ENCODE measurements at regions of chr9 and their contacts with region 1.

Region 1: DNA sequence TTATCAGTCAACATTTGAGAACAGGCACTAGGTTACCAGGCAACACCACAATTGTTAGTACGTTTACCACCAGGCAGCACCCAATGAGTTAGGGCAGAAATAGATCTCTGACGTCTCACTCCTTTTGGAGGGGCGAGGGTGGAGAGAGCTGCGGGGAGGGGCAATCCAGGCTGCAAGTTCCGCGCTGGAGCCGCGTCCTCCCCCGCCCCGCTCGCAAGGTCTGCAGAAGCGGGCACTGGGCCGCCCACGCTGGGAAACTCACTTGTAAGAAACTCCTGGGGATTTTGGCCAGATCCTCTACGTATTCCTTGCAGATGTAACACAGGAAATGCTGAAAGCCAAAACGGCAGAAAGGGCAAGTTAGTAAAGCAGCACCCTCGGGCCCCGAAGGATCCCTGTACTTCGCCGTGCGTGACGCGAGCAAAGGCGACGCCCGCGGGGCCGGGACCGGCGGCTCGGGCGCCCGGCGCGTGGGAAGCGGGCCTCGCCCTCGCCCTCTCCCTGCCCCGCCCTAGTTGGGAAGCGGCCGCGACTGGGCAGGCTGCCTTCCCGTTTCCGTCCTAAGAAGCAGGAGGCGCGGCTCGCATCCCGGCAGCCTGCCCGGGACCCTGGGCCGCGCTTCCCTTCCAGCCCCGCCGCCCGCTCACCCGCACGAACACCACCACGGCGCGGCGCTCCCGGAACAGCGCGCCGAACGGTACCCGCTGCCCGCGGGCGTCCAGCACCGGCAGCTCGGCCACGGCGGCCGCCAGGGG is 497 bp downstream of the PRXL2C start:
- DNase-seq: peak; percentile 58
- ATAC-seq: peak; percentile 64
- H3K4me3 Mint-ChIP-seq: peak overlapping the region; percentile 88
- H3K27ac Mint-ChIP-seq: peak overlapping the region; percentile 86
- H3K4me1 Mint-ChIP-seq: peaks cover 17% of the 10 kb centered on the region
- H3K27me3 Mint-ChIP-seq: no peaks in the 10 kb centered on the region
- CTCF ChIP-seq: no peak

Region 2: DNA sequence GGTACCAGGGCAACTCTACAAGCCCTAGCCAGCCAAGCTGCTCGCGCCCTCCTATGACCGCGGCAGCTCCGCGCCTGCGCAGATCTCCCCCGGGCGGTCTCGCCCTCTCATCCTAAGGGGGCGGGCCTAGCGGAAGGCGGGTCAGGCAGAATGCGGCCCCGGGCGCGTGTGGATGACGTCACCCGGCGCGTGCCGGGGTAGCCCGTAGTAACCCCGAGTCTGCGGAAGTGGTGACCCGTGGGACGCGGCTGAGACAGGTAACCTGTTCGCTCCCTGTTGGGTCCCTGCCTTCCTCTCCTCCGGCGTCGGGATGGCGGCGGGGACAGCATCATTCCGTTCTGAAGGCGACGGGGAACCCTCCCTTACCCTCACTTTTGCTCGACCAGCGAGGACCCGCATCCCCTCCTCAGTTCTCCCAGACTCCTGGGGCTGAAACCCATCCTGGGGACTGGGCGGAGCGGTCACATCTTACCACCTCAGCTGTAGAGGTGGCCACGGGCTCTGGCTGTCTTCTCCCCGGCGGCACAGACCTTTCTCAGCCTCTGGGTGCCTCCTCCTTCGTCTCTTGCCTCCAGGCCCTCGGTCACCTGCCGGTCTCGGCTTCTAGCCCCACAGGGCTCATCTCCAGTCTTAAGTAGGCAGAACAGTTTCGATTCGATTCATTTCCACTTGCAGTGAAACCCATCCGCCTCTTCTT is 1928.0 kb before region 1 on chr9 and contains the start of gene AOPEP:
- CTCF ChIA-PET with region 1: no interaction called
- POLR2A ChIA-PET with region 1: no interaction called
- intact Hi-C with region 1: loop called (anchors 10 kb)
- DNase-seq: peak; percentile 99
- ATAC-seq: peak; percentile 96
- H3K4me3 Mint-ChIP-seq: peak within 1 kb of the TSS; percentile 98
- H3K27ac Mint-ChIP-seq: peak within 1 kb of the TSS; percentile 96
- H3K4me1 Mint-ChIP-seq: peaks cover 8% of the 10 kb centered on the region
- H3K27me3 Mint-ChIP-seq: peaks cover 2% of the 10 kb centered on the region
- CTCF ChIP-seq: no peak
- total RNA-seq, gene AOPEP: 16.8 and 20.4 TPM in 2 replicates

Region 3: GRCh38 chr9:96327694-96328352 is 326.8 kb before region 1 on chr9:
- CTCF ChIA-PET with region 1: interaction called, 4 read pairs
- POLR2A ChIA-PET with region 1: interaction called, 4 read pairs
- intact Hi-C with region 1: loop called (anchors 1 kb)
- DNase-seq: no peak
- ATAC-seq: peak; percentile 73
- H3K4me3 Mint-ChIP-seq: no peak overlapping the region
- H3K27ac Mint-ChIP-seq: no peak overlapping the region
- H3K4me1 Mint-ChIP-seq: no peaks in the 10 kb centered on the region
- H3K27me3 Mint-ChIP-seq: no peaks in the 10 kb centered on the region
- CTCF ChIP-seq: peak; percentile 88

Region 4: DNA sequence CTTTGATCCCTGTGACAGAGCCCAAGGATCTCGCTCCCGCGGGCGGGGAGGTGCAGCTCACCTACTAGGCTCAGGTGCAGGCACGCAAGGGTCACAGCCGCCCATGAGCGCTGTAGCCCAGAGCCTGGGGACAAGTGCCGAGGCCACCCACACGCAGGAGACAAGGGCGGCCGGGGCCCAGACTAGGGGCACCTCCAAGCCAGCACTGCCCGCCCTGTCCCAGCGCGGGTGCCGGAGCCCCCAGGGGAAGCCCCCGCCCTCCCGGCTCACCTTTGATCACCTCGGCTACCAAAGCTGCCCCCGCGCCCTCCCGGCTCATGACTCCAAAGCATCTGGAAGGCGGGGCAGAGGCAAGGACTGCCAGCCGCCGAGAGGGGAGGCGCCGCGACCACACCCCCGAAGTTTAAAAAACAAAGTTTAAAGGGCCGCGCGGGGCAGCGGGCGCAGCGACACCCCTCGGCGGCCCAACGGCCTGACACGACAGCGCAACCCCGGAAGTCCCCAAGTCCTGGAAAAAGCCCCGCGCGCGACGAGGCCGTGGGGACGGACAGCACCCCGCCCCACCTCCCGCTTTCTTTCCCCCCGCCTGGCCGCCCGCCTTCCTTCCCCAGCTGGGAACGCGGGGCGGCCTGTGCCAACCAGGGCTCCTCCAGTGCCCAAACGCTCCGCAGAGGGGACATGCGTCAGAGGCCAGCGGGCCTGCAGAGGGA is 88.0 kb before region 1 on chr9:
- CTCF ChIA-PET with region 1: no interaction called
- POLR2A ChIA-PET with region 1: no interaction called
- intact Hi-C with region 1: loop called (anchors 1 kb)
- DNase-seq: peak; percentile 71
- ATAC-seq: peak; percentile 89
- H3K4me3 Mint-ChIP-seq: peak overlapping the region; percentile 86
- H3K27ac Mint-ChIP-seq: peak overlapping the region; percentile 81
- H3K4me1 Mint-ChIP-seq: peaks cover 17% of the 10 kb centered on the region
- H3K27me3 Mint-ChIP-seq: peaks cover 3% of the 10 kb centered on the region
- CTCF ChIP-seq: no peak

Region 5: GRCh38 chr9:96626912-96627311 is 27.7 kb before region 1 on chr9:
- CTCF ChIA-PET with region 1: no interaction called
- POLR2A ChIA-PET with region 1: no interaction called
- intact Hi-C with region 1: no loop called
- DNase-seq: no peak
- ATAC-seq: no peak
- H3K4me3 Mint-ChIP-seq: no peak overlapping the region
- H3K27ac Mint-ChIP-seq: no peak overlapping the region
- H3K4me1 Mint-ChIP-seq: no peaks in the 10 kb centered on the region
- H3K27me3 Mint-ChIP-seq: peaks cover 21% of the 10 kb centered on the region
- CTCF ChIP-seq: no peak

Region 6: DNA sequence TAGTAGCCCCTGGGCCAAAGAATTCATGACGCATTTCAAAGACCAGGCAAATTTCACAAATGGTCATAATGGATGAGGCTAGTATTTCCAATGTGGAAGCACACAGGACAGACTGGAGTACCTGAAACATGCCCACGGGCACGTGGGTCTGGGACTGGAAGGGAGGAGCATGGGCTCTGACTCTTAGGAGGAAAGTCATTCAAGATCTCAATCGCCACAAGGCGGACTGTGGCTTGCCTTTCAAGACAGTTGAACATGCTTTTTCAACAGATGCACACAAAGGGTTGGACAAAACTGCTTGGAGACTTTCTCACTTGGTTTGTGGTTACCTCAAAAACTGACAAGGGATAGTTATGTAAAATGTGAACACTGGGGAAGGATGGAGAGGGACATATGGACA is 18.0 kb after region 1 on chr9:
- CTCF ChIA-PET with region 1: no interaction called
- POLR2A ChIA-PET with region 1: no interaction called
- intact Hi-C with region 1: no loop called
- DNase-seq: no peak
- ATAC-seq: no peak
- H3K4me3 Mint-ChIP-seq: no peak overlapping the region
- H3K27ac Mint-ChIP-seq: no peak overlapping the region
- H3K4me1 Mint-ChIP-seq: no peaks in the 10 kb centered on the region
- H3K27me3 Mint-ChIP-seq: peaks cover 15% of the 10 kb centered on the region
- CTCF ChIP-seq: no peak

Region 7: DNA sequence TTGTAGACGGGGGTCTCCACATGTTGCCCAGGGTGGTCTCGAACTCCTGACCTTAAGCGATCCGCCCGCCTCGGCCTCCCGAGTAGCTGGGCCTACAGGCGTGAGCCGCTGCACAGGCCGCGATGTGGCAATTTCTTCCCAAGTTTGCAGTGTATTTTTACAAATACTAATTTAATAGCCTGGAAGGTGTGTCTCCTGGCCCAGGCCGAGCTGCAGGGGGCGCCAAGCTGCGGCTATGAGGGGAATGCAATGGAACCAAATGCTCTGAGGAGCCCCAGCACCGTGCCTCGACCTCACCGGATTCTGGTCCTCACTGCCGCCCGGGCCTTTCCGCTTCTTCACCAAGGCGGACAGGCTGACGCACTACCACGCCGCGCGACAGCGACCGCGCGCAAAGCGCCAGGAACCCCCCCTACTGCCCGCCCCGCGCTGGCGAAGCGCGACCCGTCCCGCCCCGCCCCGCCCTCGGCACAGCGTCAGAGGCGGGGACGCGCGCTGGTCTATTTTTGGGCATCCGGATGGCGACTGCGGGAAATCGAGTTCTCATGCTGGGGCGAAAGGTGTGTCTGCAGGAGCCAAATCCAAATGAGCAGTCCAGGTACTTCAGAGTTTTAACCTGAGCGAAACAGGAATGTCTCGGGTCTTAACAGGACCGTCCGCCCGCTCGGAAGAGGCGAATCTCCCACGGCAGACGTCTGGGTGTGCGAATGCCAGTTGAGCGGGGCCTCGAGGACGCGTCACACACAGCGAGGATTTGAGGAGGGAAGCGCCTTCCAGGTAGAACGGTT is 32.1 kb after region 1 on chr9:
- CTCF ChIA-PET with region 1: no interaction called
- POLR2A ChIA-PET with region 1: interaction called, 5 read pairs
- intact Hi-C with region 1: loop called (anchors 1 kb)
- DNase-seq: peak; percentile 78
- ATAC-seq: peak; percentile 97
- H3K4me3 Mint-ChIP-seq: peak overlapping the region; percentile 89
- H3K27ac Mint-ChIP-seq: peak overlapping the region; percentile 79
- H3K4me1 Mint-ChIP-seq: peaks cover 10% of the 10 kb centered on the region
- H3K27me3 Mint-ChIP-seq: no peaks in the 10 kb centered on the region
- CTCF ChIP-seq: no peak